OCI-LY7 (cell line): ENCODE measurements at regions of chr12 and their contacts with region 1.

Region 1: DNA sequence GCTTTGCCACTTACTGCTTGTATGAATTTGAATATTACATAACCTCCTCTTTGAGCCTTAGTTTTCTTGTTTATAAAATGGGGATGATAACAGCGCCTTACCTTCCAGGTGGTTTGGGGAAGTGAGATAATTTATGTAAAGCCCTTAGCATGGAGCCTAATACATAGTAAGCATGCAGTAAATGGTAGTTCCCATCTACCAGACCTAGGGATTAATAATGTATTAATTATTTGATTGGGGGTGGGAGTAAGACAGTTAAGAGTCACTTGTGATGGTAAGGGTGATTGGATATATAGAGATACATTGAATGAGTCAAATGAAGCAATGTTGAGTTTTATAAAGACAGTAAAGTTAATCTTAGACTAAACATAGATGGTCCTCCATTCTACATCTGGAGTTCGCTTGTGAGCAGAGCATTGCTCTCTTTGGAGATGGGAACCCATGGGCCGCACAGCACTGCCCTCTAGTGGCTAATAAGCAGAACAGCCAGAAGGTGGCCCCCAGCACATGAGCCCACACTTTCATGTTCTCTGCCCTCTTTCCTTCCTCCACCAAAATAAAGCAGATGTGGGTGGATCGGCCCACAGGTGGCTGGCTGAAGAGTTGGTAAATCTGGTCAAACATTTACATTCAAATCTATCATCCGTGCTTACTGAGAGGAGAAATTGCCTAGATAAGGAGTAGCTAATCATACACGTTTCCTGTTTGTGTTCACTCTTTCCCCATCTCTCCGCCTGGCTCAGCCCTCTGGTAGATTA is 26.5 kb upstream of the TAMALIN start:
- DNase-seq: peak; percentile 72
- H3K4me3 ChIP-seq: no peak overlapping the region
- H3K27ac ChIP-seq: no peak overlapping the region
- H3K4me1 ChIP-seq: peaks cover 6% of the 10 kb centered on the region
- CTCF ChIP-seq: peak; percentile 99

Region 2: DNA sequence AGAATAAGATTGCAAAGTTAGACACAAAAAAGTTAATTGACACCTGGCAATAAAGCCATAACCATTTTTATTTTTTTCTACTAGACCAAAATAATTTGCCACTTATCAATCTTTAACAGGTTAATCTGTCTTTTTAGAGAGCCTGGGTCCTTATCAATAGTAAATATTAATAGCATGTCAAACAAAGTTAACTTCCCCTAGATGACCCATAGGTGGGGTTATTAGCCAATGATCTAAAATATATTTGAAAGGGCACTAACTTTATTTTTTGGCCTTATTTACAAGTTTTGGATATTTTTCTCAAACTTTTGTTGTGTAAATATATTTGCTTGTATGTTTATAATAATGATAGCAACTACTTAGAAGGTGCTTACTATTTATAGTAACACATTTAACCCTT is 88.4 kb before region 1 on chr12:
- CTCF ChIA-PET with region 1: no interaction called
- POLR2A ChIA-PET with region 1: no interaction called
- intact Hi-C with region 1: loop called (anchors 2 kb)
- DNase-seq: peak; percentile 11
- H3K4me3 ChIP-seq: no peak overlapping the region
- H3K27ac ChIP-seq: no peak overlapping the region
- H3K4me1 ChIP-seq: no peaks in the 10 kb centered on the region
- CTCF ChIP-seq: peak; percentile 73

Region 3: GRCh38 chr12:51926718-51927117 is 53.5 kb before region 1 on chr12:
- CTCF ChIA-PET with region 1: no interaction called
- POLR2A ChIA-PET with region 1: no interaction called
- intact Hi-C with region 1: loop called (anchors 2 kb)
- DNase-seq: peak; percentile 54
- H3K4me3 ChIP-seq: no peak overlapping the region
- H3K27ac ChIP-seq: no peak overlapping the region
- H3K4me1 ChIP-seq: peaks cover 18% of the 10 kb centered on the region
- CTCF ChIP-seq: peak; percentile 79

Region 4: GRCh38 chr12:51951199-51951842 is 28.9 kb before region 1 on chr12 and contains the start of gene ACVR1B:
- CTCF ChIA-PET with region 1: no interaction called
- POLR2A ChIA-PET with region 1: no interaction called
- intact Hi-C with region 1: no loop called
- DNase-seq: peak; percentile 92
- H3K4me3 ChIP-seq: peak within 1 kb of the TSS; percentile 98
- H3K27ac ChIP-seq: no peak within 1 kb of the TSS
- H3K4me1 ChIP-seq: peaks cover 18% of the 10 kb centered on the region
- CTCF ChIP-seq: no peak
- total RNA-seq, gene ACVR1B: 3.0 and 4.1 TPM in 2 replicates

Region 5: DNA sequence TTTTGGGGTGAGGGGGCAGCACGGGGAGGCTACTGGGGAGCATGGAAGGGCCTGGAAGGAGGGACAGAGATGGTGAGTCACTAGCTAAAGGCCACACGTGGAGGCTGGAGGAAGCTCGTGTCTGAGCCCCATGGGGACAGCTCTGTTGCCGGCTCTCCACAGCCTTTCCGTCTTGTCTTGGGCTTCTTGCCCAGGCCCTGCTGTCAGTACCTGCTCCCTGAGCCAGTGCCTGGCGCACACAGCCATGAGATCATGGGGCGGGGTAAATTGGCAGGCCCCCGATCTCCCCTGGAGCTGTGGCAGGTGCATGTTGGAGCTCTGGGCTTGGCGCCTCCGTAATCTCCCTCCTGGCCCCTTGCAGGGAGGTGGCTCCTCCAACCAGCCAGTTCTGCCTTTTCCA is 227.7 kb after region 1 on chr12:
- CTCF ChIA-PET with region 1: no interaction called
- POLR2A ChIA-PET with region 1: no interaction called
- intact Hi-C with region 1: no loop called
- DNase-seq: no peak
- H3K4me3 ChIP-seq: no peak overlapping the region
- H3K27ac ChIP-seq: no peak overlapping the region
- H3K4me1 ChIP-seq: no peaks in the 10 kb centered on the region
- CTCF ChIP-seq: no peak